Activated B cell treated with CpG ODN at 0.5 μM for 24 hours (primary cell): ENCODE measurements at regions of chr9 and their contacts with region 1.

Region 1: GRCh38 chr9:129460323-129461261 is 160.3 kb downstream of the C9orf50 start:
- DNase-seq: peak; percentile 70
- ATAC-seq: peak; percentile 85
- H3K4me3 Mint-ChIP-seq: peak overlapping the region; percentile 79
- H3K27ac Mint-ChIP-seq: peak overlapping the region; percentile 83
- H3K4me1 Mint-ChIP-seq: peaks cover 22% of the 10 kb centered on the region
- H3K27me3 Mint-ChIP-seq: peaks cover 5% of the 10 kb centered on the region
- CTCF ChIP-seq: no peak

Region 2: GRCh38 chr9:129320575-129321263 is 139.9 kb before region 1 on chr9:
- CTCF ChIA-PET with region 1: no interaction called
- POLR2A ChIA-PET with region 1: interaction called, 17 read pairs
- intact Hi-C with region 1: no loop called
- DNase-seq: peak; percentile 42
- ATAC-seq: peak; percentile 88
- H3K4me3 Mint-ChIP-seq: peak overlapping the region; percentile 85
- H3K27ac Mint-ChIP-seq: peak overlapping the region; percentile 52
- H3K4me1 Mint-ChIP-seq: peaks cover 13% of the 10 kb centered on the region
- H3K27me3 Mint-ChIP-seq: peaks cover 5% of the 10 kb centered on the region
- CTCF ChIP-seq: no peak

Region 3: GRCh38 chr9:129413537-129414376 is 46.8 kb before region 1 on chr9:
- CTCF ChIA-PET with region 1: no interaction called
- POLR2A ChIA-PET with region 1: interaction called, 20 read pairs
- intact Hi-C with region 1: loop called (anchors 1 kb)
- DNase-seq: peak; percentile 99
- ATAC-seq: peak; percentile 79
- H3K4me3 Mint-ChIP-seq: peak overlapping the region; percentile 85
- H3K27ac Mint-ChIP-seq: peak overlapping the region; percentile 97
- H3K4me1 Mint-ChIP-seq: peaks cover 14% of the 10 kb centered on the region
- H3K27me3 Mint-ChIP-seq: no peaks in the 10 kb centered on the region
- CTCF ChIP-seq: no peak

Region 4: GRCh38 chr9:129482521-129483414 is 22.2 kb after region 1 on chr9:
- CTCF ChIA-PET with region 1: no interaction called
- POLR2A ChIA-PET with region 1: interaction called, 22 read pairs
- intact Hi-C with region 1: loop called (anchors 1 kb)
- DNase-seq: peak; percentile 41
- ATAC-seq: peak; percentile 36
- H3K4me3 Mint-ChIP-seq: peak overlapping the region; percentile 55
- H3K27ac Mint-ChIP-seq: no peak overlapping the region
- H3K4me1 Mint-ChIP-seq: peaks cover 24% of the 10 kb centered on the region
- H3K27me3 Mint-ChIP-seq: peaks cover 33% of the 10 kb centered on the region
- CTCF ChIP-seq: no peak

Region 5: DNA sequence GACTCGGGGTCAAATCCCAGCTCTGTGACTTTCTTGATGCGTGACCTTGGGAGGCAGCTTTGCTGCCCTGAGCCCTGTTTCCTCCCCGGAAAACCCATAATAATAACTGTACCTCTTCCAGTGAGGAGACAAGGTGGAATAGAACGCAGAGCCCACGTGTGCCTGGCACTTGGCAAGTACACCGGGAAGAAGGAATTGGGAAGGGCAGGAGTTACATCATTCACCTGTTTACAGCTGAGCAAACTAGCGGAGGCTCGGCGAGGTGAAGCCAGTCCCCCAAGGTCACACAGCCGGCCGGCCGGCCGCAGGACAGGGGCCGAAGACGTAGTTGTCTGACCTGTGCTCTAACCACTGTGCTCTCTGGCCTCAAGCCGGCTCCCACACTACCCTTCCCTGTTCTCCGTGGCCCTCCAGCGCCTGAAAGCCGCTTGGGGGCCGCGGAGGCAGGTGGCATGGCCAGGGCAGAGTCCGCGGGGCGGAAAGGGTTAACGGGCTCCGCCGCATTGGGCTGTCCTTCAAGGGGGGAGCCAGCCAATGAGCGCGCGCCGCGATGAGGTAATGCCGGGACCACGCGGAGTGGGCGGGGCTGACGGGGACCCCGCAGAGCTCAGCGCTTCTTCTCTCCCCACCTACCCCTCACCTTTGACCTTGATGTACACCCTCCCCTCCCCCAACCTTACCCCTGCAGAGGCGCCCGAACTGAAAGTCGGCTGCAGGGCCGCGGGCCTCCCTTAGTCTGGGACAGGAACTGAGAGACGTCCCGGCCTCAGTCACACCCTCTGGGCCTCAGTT is 35.1 kb after region 1 on chr9:
- CTCF ChIA-PET with region 1: interaction called, 3 read pairs
- POLR2A ChIA-PET with region 1: interaction called, 17 read pairs
- intact Hi-C with region 1: no loop called
- DNase-seq: peak; percentile 66
- ATAC-seq: peak; percentile 80
- H3K4me3 Mint-ChIP-seq: peak overlapping the region; percentile 78
- H3K27ac Mint-ChIP-seq: no peak overlapping the region
- H3K4me1 Mint-ChIP-seq: peaks cover 17% of the 10 kb centered on the region
- H3K27me3 Mint-ChIP-seq: peaks cover 22% of the 10 kb centered on the region
- CTCF ChIP-seq: no peak

Region 6: GRCh38 chr9:130406278-130406895 is 945.8 kb after region 1 on chr9:
- CTCF ChIA-PET with region 1: no interaction called
- POLR2A ChIA-PET with region 1: no interaction called
- intact Hi-C with region 1: no loop called
- DNase-seq: no peak
- ATAC-seq: no peak
- H3K4me3 Mint-ChIP-seq: no peak overlapping the region
- H3K27ac Mint-ChIP-seq: no peak overlapping the region
- H3K4me1 Mint-ChIP-seq: no peaks in the 10 kb centered on the region
- H3K27me3 Mint-ChIP-seq: no peaks in the 10 kb centered on the region
- CTCF ChIP-seq: no peak